ENCODE measurements at regions of chrX and their contacts with region 1.

Region 1: DNA sequence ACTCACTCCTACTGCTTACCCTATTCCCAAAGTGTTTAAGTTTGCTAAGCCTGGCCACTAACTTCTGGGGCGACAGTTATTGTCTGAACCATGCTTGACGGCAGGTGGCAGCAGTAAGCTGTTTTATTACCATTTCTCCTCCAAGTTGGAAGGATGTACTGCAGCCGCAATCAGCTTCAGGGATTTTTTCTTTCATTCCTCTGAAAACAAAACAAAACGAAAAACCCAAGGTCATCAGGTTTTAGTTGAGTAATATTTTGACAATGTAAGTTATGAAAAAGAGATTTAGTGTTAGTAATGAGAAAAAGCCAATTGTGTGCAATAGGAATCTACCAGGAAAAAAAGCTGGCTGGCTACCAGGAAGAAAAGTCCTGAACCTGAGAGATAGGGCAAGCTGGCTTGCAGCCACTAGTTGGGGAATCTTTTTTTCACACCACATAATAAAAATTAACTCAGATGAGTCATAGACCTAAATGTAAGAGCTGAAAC is 13.2 kb upstream of the RAB9B start:
- DNase-seq: no peak
- ATAC-seq: no peak
- H3K4me3 Mint-ChIP-seq: no peak overlapping the region
- H3K27ac Mint-ChIP-seq: no peak overlapping the region
- H3K4me1 Mint-ChIP-seq: no peaks in the 10 kb centered on the region
- H3K27me3 Mint-ChIP-seq: no peaks in the 10 kb centered on the region
- CTCF ChIP-seq: no peak

Region 2: GRCh38 chrX:103586659-103587058 is 258.6 kb before region 1 on chrX:
- CTCF ChIA-PET with region 1: no interaction called
- POLR2A ChIA-PET with region 1: no interaction called
- intact Hi-C with region 1: no loop called
- DNase-seq: no peak
- ATAC-seq: no peak
- H3K4me3 Mint-ChIP-seq: peak overlapping the region; percentile 89
- H3K27ac Mint-ChIP-seq: no peak overlapping the region
- H3K4me1 Mint-ChIP-seq: peaks cover 16% of the 10 kb centered on the region
- H3K27me3 Mint-ChIP-seq: no peaks in the 10 kb centered on the region
- CTCF ChIP-seq: no peak

Region 3: GRCh38 chrX:103932133-103932532 is 86.9 kb after region 1 on chrX:
- CTCF ChIA-PET with region 1: no interaction called
- POLR2A ChIA-PET with region 1: no interaction called
- intact Hi-C with region 1: loop called (anchors 5 kb)
- DNase-seq: no peak
- ATAC-seq: no peak
- H3K4me3 Mint-ChIP-seq: no peak overlapping the region
- H3K27ac Mint-ChIP-seq: no peak overlapping the region
- H3K4me1 Mint-ChIP-seq: peaks cover 9% of the 10 kb centered on the region
- H3K27me3 Mint-ChIP-seq: no peaks in the 10 kb centered on the region
- CTCF ChIP-seq: no peak

Region 4: DNA sequence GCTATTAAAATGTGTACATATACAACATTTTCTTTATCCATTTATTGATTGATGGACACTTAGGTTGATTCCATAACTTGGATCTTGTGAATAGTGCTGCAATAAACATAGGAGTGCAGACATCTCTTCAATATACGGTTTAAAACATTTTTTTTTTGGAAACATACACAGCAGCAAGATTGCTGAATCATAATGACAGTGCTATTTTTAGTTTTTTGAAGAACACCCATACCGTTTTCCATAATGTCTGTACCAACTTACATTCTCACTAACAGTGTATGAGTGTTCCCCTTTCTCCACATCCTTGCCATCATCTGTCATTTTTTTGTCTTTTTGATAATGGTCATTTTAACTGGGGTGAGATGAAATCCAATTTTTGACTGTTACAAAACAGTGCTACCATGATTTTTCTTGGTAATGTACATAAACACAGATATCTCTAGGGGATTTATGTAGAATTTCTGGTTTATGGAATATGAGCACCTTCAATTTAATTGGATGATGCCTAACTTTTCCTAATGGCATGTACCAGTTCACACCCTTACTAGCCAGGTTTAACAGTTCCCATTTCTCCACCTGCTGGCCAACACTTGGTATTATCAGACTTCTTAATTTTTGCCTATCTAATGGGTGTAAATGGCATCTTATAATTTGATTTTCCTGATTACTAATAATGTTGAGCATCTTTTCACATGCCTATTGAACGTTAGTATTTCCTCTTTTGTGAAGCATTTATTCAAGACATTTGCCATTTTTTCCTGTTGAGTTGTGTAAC is 96.2 kb after region 1 on chrX:
- CTCF ChIA-PET with region 1: interaction called, 28 read pairs
- POLR2A ChIA-PET with region 1: no interaction called
- intact Hi-C with region 1: loop called (anchors 1 kb)
- DNase-seq: no peak
- ATAC-seq: no peak
- H3K4me3 Mint-ChIP-seq: no peak overlapping the region
- H3K27ac Mint-ChIP-seq: no peak overlapping the region
- H3K4me1 Mint-ChIP-seq: peaks cover 14% of the 10 kb centered on the region
- H3K27me3 Mint-ChIP-seq: no peaks in the 10 kb centered on the region
- CTCF ChIP-seq: no peak

Region 5: GRCh38 chrX:104270920-104271512 is 425.8 kb after region 1 on chrX:
- CTCF ChIA-PET with region 1: no interaction called
- POLR2A ChIA-PET with region 1: no interaction called
- intact Hi-C with region 1: loop called (anchors 5 kb)
- DNase-seq: no peak
- ATAC-seq: no peak
- H3K4me3 Mint-ChIP-seq: peak overlapping the region; percentile 2
- H3K27ac Mint-ChIP-seq: no peak overlapping the region
- H3K4me1 Mint-ChIP-seq: no peaks in the 10 kb centered on the region
- H3K27me3 Mint-ChIP-seq: peaks cover 6% of the 10 kb centered on the region
- CTCF ChIP-seq: no peak

Measured in activated B cell treated with CpG ODN at 0.5 μM for 24 hours (primary cell).